ENCODE measurements at regions of chr5 and their contacts with region 1.

Region 1: GRCh38 chr5:138752951-138753793 is at the start of gene CTNNA1:
- DNase-seq: peak; percentile 79 to 92 (median 88)
- ATAC-seq: peak; percentile 64 to 85 (median 78)
- H3K4me3 ChIP-seq: peak within 1 kb of the TSS; percentile 63 to 100 (median 95)
- H3K27ac ChIP-seq: peak within 1 kb of the TSS; percentile 99 to 100 (median 100)
- H3K4me1 ChIP-seq: peaks cover 13 to 41% (median 32%) of the 10 kb centered on the region in 12 donors
- H3K27me3 ChIP-seq: no peaks in the 10 kb centered on the region
- CTCF ChIP-seq: peak in 1 of 12 donors; percentile 1
- POLR2A ChIP-seq: peak in 1 of 2 donors; percentile 79
- total RNA-seq, gene CTNNA1: 331 to 460 (median 410) TPM

Region 2: DNA sequence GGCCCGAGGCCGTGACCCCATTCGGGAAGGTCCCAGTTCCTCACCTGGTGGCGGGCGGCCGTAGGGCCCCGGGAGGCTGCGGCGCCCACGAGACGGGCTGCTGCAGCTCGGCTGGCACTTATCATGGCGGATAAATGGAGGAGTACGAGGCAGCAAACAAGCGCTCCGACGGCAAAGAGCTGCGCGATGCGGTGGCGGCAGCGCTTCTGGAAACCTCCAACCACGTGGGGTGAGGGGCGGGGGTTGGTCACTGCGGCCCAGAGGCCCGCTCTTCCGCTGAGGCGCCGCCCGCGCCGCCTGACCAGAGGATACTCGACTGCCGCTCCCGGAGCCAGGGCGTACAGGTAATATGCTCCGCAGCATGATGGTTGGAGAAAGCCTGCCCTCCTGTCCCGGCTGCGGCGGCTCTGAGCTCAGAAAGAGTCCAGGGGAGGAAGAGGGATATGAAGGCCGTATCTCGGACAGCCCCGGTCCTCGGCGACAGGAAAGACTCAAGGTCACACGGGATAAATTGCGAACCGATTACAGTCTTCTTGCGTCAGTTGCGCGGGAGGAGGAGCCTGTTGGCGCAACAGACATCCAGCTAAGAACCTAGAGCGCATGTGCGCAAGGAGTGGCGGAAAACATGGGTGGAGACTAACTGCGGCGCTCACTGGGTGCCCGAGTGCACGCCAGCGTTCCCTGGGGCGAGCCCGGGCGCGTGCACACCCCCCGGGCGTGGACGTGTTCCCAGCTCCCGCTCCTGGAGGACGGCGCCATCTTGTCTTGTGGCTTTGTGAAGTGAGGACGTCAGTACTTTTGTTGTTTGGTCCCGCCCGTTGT is 177.8 kb before region 1 on chr5 and contains the start of gene HSPA9:
- intact Hi-C with region 1: loop called in 2 of 10 experiments (anchors 5 kb)
- DNase-seq: peak; percentile 98 to 99 (median 98)
- ATAC-seq: peak; percentile 95 to 98 (median 96)
- H3K4me3 ChIP-seq: peak within 1 kb of the TSS; percentile 68 to 98 (median 89)
- H3K27ac ChIP-seq: peak within 1 kb of the TSS; percentile 98 to 100 (median 99)
- H3K4me1 ChIP-seq: peaks cover 0 to 35% (median 11%) of the 10 kb centered on the region in 12 donors
- H3K27me3 ChIP-seq: no peaks in the 10 kb centered on the region
- CTCF ChIP-seq: no peak
- POLR2A ChIP-seq: peak; percentile 33 to 54
- total RNA-seq, gene HSPA9: 211 to 481 (median 313) TPM

Region 3: DNA sequence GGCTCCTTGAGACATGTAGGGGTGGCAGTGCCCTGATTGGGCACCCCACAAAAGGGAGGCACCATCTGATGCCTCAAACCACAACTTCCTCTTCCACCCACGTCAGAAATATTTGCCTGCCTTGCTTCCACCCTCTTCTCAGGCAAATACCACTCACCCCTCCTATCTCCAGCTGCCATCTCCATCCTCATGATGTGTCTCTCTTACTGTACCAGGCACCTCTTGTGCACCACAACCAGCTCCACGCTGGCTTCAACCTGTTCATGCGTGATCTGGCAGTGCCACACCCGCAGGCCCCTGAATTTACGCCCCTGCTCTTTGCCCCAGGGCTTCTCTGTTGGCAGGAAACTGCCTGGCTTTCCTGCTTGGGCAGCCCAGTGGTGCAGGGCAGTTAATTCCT is 90.2 kb before region 1 on chr5:
- intact Hi-C with region 1: loop called in 1 of 10 experiments (anchors 5 kb)
- DNase-seq: peak in 1 of 5 donors; percentile 15
- ATAC-seq: no peak
- H3K4me3 ChIP-seq: no peak overlapping the region
- H3K27ac ChIP-seq: peak overlapping the region in 1 of 12 donors; percentile 28
- H3K4me1 ChIP-seq: peaks cover 0 to 48% (median 9%) of the 10 kb centered on the region in 12 donors
- H3K27me3 ChIP-seq: no peaks in the 10 kb centered on the region
- CTCF ChIP-seq: no peak
- POLR2A ChIP-seq: no peak

Region 4: DNA sequence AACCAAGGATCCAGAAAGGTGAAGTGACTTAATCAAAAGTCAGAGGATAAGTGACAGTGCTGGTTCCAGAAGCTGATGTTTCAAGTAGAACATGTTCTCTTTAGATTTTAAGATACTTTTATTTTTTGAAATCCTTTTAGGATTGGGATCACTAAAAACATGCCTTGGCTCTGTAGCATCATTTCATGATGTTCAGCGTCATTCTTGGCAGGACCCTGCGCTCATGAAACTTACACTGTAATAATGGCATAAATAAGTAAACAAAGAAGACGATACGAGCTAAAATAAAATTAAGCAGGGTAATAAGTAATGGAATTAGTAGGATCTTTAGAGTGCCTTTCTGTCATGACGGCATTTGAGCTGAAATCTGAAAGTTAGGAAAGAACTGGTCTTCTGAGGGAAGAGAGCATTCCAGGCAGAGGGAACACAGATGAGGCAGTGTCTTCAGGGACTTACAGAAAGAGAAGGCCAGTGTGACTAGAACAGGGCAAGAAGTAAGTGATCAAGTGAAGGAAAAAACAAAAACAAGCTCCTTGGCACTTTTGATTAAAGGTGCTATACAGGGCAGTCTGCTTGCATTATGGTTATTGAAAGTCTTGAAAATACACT is 19.9 kb after region 1 on chr5:
- intact Hi-C with region 1: no loop called
- DNase-seq: no peak
- ATAC-seq: peak in 3 of 4 donors; percentile 27 to 44 (median 29)
- H3K4me3 ChIP-seq: no peak overlapping the region
- H3K27ac ChIP-seq: peak overlapping the region in 1 of 12 donors; percentile 22
- H3K4me1 ChIP-seq: peaks cover 0 to 60% (median 38%) of the 10 kb centered on the region in 12 donors
- H3K27me3 ChIP-seq: no peaks in the 10 kb centered on the region
- CTCF ChIP-seq: no peak
- POLR2A ChIP-seq: no peak

Region 5: GRCh38 chr5:138809391-138809790 is 56.2 kb after region 1 on chr5:
- intact Hi-C with region 1: loop called in 1 of 10 experiments (anchors 5 kb)
- DNase-seq: no peak
- ATAC-seq: no peak
- H3K4me3 ChIP-seq: no peak overlapping the region
- H3K27ac ChIP-seq: no peak overlapping the region
- H3K4me1 ChIP-seq: peaks cover 0 to 31% (median 5%) of the 10 kb centered on the region in 12 donors
- H3K27me3 ChIP-seq: no peaks in the 10 kb centered on the region
- CTCF ChIP-seq: no peak
- POLR2A ChIP-seq: no peak

Region 6: DNA sequence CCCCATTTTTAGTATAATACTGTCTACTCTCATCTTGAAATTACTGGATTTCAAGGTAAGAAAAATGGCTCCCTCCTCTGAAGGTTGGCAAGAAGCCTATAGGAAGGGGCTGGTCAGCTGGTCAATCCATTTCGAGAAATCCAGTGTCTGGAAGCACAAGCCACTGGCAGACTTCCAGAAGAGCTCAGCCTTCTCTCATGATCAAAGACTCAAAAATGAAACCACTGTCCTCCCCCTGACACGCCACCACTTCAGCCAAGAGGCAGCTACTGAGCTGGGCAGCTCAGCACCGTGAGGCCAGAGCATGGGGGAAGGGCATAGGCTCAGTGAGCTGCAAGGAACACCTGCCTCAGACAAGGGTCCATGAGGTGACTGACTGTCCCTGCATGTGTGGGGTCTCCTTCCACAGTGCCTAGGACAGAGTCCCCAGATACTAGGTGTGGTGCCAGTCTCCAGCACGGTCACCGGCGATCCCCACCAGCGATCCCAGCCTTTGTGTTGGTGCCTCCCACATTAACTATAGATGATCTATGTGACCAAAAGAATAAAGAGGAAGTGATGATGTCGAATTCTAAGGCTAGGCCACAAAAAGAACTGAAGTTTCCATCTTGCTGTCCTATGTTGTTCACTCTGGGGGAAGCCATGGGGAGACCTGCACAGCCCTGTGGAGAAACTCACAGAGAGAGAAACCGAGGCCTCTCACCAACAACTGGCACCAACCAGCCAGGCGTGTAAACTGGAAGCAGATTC is 222.1 kb after region 1 on chr5:
- intact Hi-C with region 1: loop called in 1 of 10 experiments (anchors 5 kb)
- DNase-seq: peak; percentile 69 to 73 (median 70)
- ATAC-seq: peak in 3 of 4 donors; percentile 25 to 53 (median 41)
- H3K4me3 ChIP-seq: no peak overlapping the region
- H3K27ac ChIP-seq: peak overlapping the region; percentile 62 to 95 (median 84)
- H3K4me1 ChIP-seq: peaks cover 0 to 54% (median 44%) of the 10 kb centered on the region in 12 donors
- H3K27me3 ChIP-seq: no peaks in the 10 kb centered on the region
- CTCF ChIP-seq: no peak
- POLR2A ChIP-seq: no peak

Region 7: DNA sequence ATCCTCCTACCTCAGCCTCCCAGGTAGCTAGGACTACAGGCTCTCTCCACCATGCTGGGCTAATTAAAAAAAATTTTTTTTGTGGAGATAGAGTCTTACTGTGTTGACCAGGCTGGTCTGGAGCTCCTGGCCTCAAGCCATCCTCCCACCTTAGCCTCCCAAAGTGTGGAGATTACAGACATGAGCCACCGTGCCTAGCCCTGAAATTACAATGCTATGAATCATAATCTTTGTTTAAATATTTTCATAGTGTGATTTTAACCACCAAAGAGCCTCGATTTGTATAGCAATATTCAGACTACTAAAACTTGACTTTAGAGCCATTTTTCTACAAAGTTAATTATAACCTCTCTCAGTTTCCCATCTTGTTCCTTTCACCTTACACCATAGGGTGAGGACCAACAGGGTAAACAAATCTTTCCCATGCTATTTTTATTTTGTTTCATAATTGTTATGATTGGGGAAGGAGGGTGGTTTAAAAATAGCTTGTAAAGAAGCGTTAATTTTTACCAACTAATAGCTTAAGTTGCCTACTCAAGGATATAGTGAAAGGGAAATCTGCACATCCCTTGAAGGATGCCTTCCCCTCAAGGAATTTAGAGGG is 840.6 kb after region 1 on chr5:
- intact Hi-C with region 1: no loop called
- DNase-seq: no peak
- ATAC-seq: peak in 2 of 4 donors; percentile 24 to 25
- H3K4me3 ChIP-seq: no peak overlapping the region
- H3K27ac ChIP-seq: peak overlapping the region in 2 of 12 donors; percentile 14 to 38
- H3K4me1 ChIP-seq: peaks cover 0 to 39% (median 12%) of the 10 kb centered on the region in 12 donors
- H3K27me3 ChIP-seq: no peaks in the 10 kb centered on the region
- CTCF ChIP-seq: no peak
- POLR2A ChIP-seq: no peak